Heart left ventricle (tissue), 16 donors: ENCODE measurements at regions of chr11 and their contacts with region 1.

Region 1: GRCh38 chr11:120172054-120172911 is 34.4 kb upstream of the TRIM29 start:
- DNase-seq: peak; percentile 68 to 81 (median 71)
- ATAC-seq: peak; percentile 37 to 75 (median 64)
- H3K4me3 ChIP-seq: no peak overlapping the region
- H3K27ac ChIP-seq: no peak overlapping the region
- H3K4me1 ChIP-seq: peaks cover 0 to 25% (median 8%) of the 10 kb centered on the region in 12 donors
- H3K27me3 ChIP-seq: peaks cover 0 to 60% (median 21%) of the 10 kb centered on the region in 9 donors
- CTCF ChIP-seq: peak; percentile 73 to 93 (median 84)
- POLR2A ChIP-seq: no peak

Region 2: GRCh38 chr11:120210626-120211521 is 38.6 kb after region 1 on chr11 and contains the start of gene OAF:
- intact Hi-C with region 1: loop called in 2 of 10 experiments (anchors 5 kb)
- DNase-seq: peak; percentile 80 to 88 (median 81)
- ATAC-seq: peak; percentile 55 to 88 (median 82)
- H3K4me3 ChIP-seq: peak within 1 kb of the TSS; percentile 54 to 94 (median 72)
- H3K27ac ChIP-seq: peak within 1 kb of the TSS; percentile 67 to 87 (median 77)
- H3K4me1 ChIP-seq: peaks cover 0 to 67% (median 34%) of the 10 kb centered on the region in 12 donors
- H3K27me3 ChIP-seq: no peaks in the 10 kb centered on the region
- CTCF ChIP-seq: peak in 9 of 12 donors; percentile 4 to 40 (median 17)
- POLR2A ChIP-seq: peak in 1 of 2 donors; percentile 45
- total RNA-seq, gene OAF: 10.3 to 41.9 (median 19.9) TPM

Region 3: DNA sequence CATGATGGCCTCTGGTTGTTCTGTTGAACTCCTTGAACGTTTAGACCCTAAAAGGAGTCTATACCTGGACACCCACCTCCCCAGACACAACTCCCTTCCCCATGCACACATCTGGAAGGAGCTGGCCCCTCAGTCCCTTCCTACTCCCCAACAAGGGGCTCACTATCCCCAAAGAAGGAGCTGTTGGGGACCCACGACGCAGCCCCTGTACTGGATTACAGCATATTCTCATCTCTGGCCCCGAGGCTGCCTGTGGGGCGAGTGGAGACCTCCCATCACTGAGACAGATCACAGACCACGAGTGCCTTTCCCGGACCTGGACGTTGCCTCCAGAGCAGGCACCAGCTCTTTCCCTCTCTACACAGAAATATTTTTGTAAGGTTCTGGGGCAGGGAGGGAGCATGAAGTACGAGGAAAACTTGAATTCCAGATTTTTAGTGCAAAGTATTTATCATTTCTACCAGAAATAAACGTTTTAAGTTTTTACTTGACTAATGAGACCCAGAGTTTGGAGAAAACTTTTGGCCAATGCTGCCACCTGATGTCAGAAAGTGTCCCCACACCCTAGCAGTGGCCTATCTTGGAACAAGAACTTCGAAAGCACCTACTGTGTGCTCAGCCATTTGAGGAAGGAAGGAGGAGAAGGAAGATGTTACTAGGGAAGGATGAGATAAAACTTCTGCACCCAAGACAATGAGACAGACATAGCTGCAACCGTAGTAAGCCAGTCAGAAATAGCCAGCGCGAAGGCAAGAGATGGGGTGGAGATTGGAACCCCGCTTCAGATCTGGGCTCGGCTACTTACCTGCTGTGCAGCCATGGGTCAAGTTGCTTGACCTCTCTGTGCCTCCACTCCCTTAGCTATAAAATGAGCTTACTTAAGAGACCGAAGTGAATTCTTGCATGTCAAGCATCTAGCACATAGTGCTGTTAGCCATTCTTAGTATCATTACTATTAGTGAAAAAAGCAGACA is 57.5 kb after region 1 on chr11:
- intact Hi-C with region 1: loop called (anchors 1 to 2 kb)
- DNase-seq: no peak
- ATAC-seq: no peak
- H3K4me3 ChIP-seq: no peak overlapping the region
- H3K27ac ChIP-seq: peak overlapping the region in 1 of 12 donors; percentile 47
- H3K4me1 ChIP-seq: peaks cover 0 to 20% (median 12%) of the 10 kb centered on the region in 12 donors
- H3K27me3 ChIP-seq: peaks cover 0 to 21% (median 0%) of the 10 kb centered on the region in 9 donors
- CTCF ChIP-seq: peak; percentile 56 to 86 (median 74)
- POLR2A ChIP-seq: no peak

Region 4: GRCh38 chr11:120261931-120262330 is 89.6 kb after region 1 on chr11:
- intact Hi-C with region 1: no loop called
- DNase-seq: no peak
- ATAC-seq: no peak
- H3K4me3 ChIP-seq: no peak overlapping the region
- H3K27ac ChIP-seq: no peak overlapping the region
- H3K4me1 ChIP-seq: no peaks in the 10 kb centered on the region
- H3K27me3 ChIP-seq: peaks cover 0 to 26% (median 9%) of the 10 kb centered on the region in 9 donors
- CTCF ChIP-seq: no peak
- POLR2A ChIP-seq: no peak

Region 5: DNA sequence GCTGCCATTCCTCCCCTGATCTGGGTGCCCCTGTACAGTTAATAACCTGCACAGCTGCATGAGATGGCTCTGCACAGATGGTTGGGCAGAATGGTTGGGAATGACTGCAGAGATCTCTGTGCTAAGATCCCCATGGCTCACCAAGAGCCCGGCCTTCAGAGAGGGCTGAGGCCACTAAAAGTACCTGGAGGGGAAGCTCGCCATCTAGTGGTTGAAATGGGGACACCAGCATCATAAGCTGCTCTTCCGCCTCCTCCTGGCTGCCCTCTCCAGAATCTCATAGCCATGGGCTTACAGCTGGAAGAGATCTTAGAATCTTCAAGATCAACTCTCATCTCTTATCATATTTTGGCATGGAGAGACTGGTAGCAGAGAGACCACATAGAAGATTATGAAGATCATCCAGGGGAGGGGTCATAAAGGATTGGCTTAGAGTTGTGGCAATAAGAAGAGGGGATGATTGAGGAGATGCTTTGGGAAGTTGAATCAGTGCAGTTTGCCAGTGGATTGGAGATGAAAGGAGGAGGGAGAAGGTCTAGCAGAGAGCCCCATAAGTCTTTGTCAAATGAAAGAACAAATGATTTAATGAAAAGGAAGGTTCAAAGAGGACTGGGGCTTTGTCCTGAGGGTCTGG is 130.8 kb after region 1 on chr11:
- intact Hi-C with region 1: loop called (anchors 1 to 5 kb)
- DNase-seq: peak; percentile 54 to 79 (median 66)
- ATAC-seq: peak; percentile 67 to 83 (median 78)
- H3K4me3 ChIP-seq: no peak overlapping the region
- H3K27ac ChIP-seq: no peak overlapping the region
- H3K4me1 ChIP-seq: peaks cover 0 to 14% (median 0%) of the 10 kb centered on the region in 12 donors
- H3K27me3 ChIP-seq: peaks cover 0 to 14% (median 0%) of the 10 kb centered on the region in 9 donors
- CTCF ChIP-seq: peak; percentile 71 to 93 (median 90)
- POLR2A ChIP-seq: no peak

Region 6: GRCh38 chr11:120527111-120527761 is 355.0 kb after region 1 on chr11:
- intact Hi-C with region 1: no loop called
- DNase-seq: no peak
- ATAC-seq: peak in 3 of 4 donors; percentile 16 to 33 (median 32)
- H3K4me3 ChIP-seq: no peak overlapping the region
- H3K27ac ChIP-seq: no peak overlapping the region
- H3K4me1 ChIP-seq: peaks cover 0 to 8% (median 0%) of the 10 kb centered on the region in 12 donors
- H3K27me3 ChIP-seq: peaks cover 0 to 27% (median 8%) of the 10 kb centered on the region in 9 donors
- CTCF ChIP-seq: no peak
- POLR2A ChIP-seq: no peak